Brain microvascular endothelial cell (primary cell): ENCODE measurements at regions of chr6 and their contacts with region 1.

Region 1: GRCh38 chr6:47309291-47310130 is at the start of gene TNFRSF21:
- DNase-seq: peak; percentile 86
- H3K4me3 ChIP-seq: peak within 1 kb of the TSS; percentile 76
- H3K27ac ChIP-seq: peak within 1 kb of the TSS; percentile 37
- H3K27me3 ChIP-seq: no peaks in the 10 kb centered on the region
- CTCF ChIP-seq: peak; percentile 98

Region 2: GRCh38 chr6:47097092-47097945 is 212.2 kb before region 1 on chr6:
- in situ Hi-C with region 1: loop called (anchors 10 kb)
- DNase-seq: peak; percentile 83
- H3K4me3 ChIP-seq: no peak overlapping the region
- H3K27ac ChIP-seq: no peak overlapping the region
- H3K27me3 ChIP-seq: no peaks in the 10 kb centered on the region
- CTCF ChIP-seq: peak; percentile 84

Region 3: GRCh38 chr6:47247227-47247797 is 62.2 kb before region 1 on chr6:
- in situ Hi-C with region 1: no loop called
- DNase-seq: no peak
- H3K4me3 ChIP-seq: no peak overlapping the region
- H3K27ac ChIP-seq: no peak overlapping the region
- H3K27me3 ChIP-seq: no peaks in the 10 kb centered on the region
- CTCF ChIP-seq: no peak

Region 4: GRCh38 chr6:47595797-47596196 is 286.3 kb after region 1 on chr6:
- in situ Hi-C with region 1: no loop called
- DNase-seq: no peak
- H3K4me3 ChIP-seq: no peak overlapping the region
- H3K27ac ChIP-seq: no peak overlapping the region
- H3K27me3 ChIP-seq: no peaks in the 10 kb centered on the region
- CTCF ChIP-seq: no peak